Breast epithelium (tissue), 4 donors: ENCODE measurements at regions of chr18 and their contacts with region 1.

Region 1: GRCh38 chr18:59560556-59560955 is 136.7 kb downstream of the CCBE1 start:
- DNase-seq: no peak
- H3K4me3 ChIP-seq: no peak overlapping the region
- H3K27ac ChIP-seq: no peak overlapping the region
- H3K4me1 ChIP-seq: no peaks in the 10 kb centered on the region
- H3K27me3 ChIP-seq: no peaks in the 10 kb centered on the region
- CTCF ChIP-seq: no peak
- POLR2A ChIP-seq: no peak

Region 2: GRCh38 chr18:58584200-58585127 is 976.1 kb before region 1 on chr18:
- intact Hi-C with region 1: loop called (anchors 5 kb)
- DNase-seq: no peak
- H3K4me3 ChIP-seq: no peak overlapping the region
- H3K27ac ChIP-seq: no peak overlapping the region
- H3K4me1 ChIP-seq: no peaks in the 10 kb centered on the region
- H3K27me3 ChIP-seq: no peaks in the 10 kb centered on the region
- CTCF ChIP-seq: no peak
- POLR2A ChIP-seq: no peak

Region 3: DNA sequence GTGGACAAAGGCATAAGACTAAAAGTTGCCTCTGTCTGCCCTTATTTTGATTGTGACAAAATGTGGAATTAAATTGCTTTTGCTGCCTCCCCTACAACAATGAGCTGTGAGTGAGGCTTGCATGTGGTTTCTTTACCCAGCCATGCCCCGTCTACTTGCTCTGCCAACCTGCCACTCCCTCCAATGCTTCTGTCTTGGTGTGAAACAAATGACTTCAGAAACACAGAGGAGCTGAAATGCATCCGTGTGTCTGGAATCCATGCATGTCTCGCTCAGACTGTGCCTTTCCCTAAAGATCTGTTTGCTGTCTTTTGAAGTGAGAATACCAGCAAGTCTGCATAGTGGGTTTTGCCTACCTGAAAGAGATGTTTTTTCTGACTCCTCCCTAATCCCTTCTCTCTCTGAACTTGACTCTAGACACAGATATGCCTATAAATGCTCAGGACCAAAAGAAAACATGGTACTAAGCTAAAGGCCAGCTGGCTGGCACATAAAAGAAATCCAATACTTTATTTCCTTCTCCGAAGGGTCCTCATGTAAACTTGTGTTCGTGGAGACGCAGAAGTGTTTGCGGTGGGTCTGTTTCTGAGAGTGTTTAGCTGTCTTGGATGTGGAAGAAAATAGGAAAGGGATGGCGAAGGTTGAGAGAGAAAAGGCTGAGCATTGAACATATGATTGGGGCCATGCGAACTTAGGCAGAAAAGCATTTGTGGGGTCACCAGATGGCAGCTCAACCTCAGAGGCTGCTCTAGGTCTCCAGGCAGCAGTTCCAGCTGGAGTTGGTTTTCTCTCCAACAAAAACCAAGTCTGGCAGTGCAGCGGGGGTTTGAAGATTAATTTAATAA is 16.2 kb after region 1 on chr18:
- intact Hi-C with region 1: no loop called
- DNase-seq: no peak
- H3K4me3 ChIP-seq: no peak overlapping the region
- H3K27ac ChIP-seq: no peak overlapping the region
- H3K4me1 ChIP-seq: no peaks in the 10 kb centered on the region
- H3K27me3 ChIP-seq: no peaks in the 10 kb centered on the region
- CTCF ChIP-seq: no peak
- POLR2A ChIP-seq: no peak

Region 4: GRCh38 chr18:59767732-59768131 is 207.2 kb after region 1 on chr18:
- intact Hi-C with region 1: no loop called
- DNase-seq: no peak
- H3K4me3 ChIP-seq: no peak overlapping the region
- H3K27ac ChIP-seq: peak overlapping the region in 1 of 2 donors; percentile 48
- H3K4me1 ChIP-seq: no peaks in the 10 kb centered on the region
- H3K27me3 ChIP-seq: no peaks in the 10 kb centered on the region
- CTCF ChIP-seq: no peak
- POLR2A ChIP-seq: no peak

Region 5: DNA sequence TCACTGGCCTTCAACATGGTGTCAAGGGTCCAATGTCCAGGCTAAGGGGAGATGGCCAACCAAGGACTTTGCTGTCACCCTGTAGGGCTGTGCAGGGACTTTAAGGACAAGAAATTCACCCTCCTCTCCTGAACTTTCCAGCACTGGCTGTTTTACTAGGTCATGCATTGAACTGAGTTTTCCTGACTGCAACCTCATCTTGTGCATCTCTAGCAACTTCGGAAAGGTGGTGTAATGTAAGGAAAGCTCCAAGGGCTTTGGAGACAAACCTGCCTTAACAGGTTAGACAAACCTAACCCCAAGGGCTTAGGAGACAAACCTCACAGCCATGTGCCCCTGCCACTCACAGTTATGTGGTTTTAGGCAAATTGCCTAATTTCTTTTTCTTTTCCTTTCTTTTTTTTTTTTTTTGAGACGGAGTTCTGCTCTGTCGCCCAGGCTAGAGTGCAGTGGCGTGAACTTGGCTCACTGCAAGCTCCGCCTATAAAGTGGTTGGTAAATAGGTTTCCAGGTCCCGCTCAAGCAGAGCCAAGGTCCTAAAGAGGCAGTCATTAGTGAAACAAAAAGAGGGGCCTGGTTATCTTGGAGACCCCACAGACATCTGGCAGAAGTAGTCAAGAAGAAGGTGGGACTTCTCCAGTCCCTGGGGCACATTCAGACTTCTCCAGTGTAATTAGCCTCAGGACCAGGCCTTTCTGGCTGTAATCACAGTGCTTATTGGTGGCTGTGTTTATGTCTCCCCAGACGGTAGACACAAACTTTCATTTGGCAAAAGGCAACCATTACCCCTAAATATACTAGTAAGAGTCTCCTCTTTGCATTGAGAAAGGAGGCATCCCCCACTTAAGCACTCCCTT is 301.6 kb after region 1 on chr18:
- intact Hi-C with region 1: no loop called
- DNase-seq: no peak
- H3K4me3 ChIP-seq: no peak overlapping the region
- H3K27ac ChIP-seq: no peak overlapping the region
- H3K4me1 ChIP-seq: no peaks in the 10 kb centered on the region
- H3K27me3 ChIP-seq: peaks cover 0 to 4% of the 10 kb centered on the region in 2 donors
- CTCF ChIP-seq: no peak
- POLR2A ChIP-seq: no peak